Naive thymus-derived CD4-positive, alpha-beta T cell (primary cell): ENCODE measurements at regions of chr6 and their contacts with region 1.

Region 1: GRCh38 chr6:35370124-35370741 is 27.9 kb downstream of the PPARD start:
- DNase-seq: peak in 2 of 9 donors; percentile 21 to 46
- ATAC-seq: peak; percentile 89
- H3K4me3 ChIP-seq: peak overlapping the region; percentile 12
- H3K4me3 Mint-ChIP-seq: peak overlapping the region; percentile 68 to 84 (median 76)
- H3K27ac ChIP-seq: peak overlapping the region; percentile 45
- H3K27ac Mint-ChIP-seq: peak overlapping the region; percentile 63 to 94 (median 86)
- H3K4me1 ChIP-seq: peaks cover 35 to 40% of the 10 kb centered on the region in 2 donors
- H3K4me1 Mint-ChIP-seq: peaks cover 48 to 84% (median 68%) of the 10 kb centered on the region in 7 donors
- H3K27me3 ChIP-seq: no peaks in the 10 kb centered on the region
- H3K27me3 Mint-ChIP-seq: no peaks in the 10 kb centered on the region

Region 2: GRCh38 chr6:34729631-34730470 is 640.4 kb before region 1 on chr6:
- CTCF ChIA-PET with region 1: no interaction called
- POLR2A ChIA-PET with region 1: no interaction called
- intact Hi-C with region 1: no loop called
- DNase-seq: no peak
- ATAC-seq: no peak
- H3K4me3 ChIP-seq: no peak overlapping the region
- H3K4me3 Mint-ChIP-seq: no peak overlapping the region
- H3K27ac ChIP-seq: no peak overlapping the region
- H3K27ac Mint-ChIP-seq: no peak overlapping the region
- H3K4me1 ChIP-seq: no peaks in the 10 kb centered on the region
- H3K4me1 Mint-ChIP-seq: no peaks in the 10 kb centered on the region
- H3K27me3 ChIP-seq: no peaks in the 10 kb centered on the region
- H3K27me3 Mint-ChIP-seq: no peaks in the 10 kb centered on the region

Region 3: GRCh38 chr6:35415065-35415991 is 45.1 kb after region 1 on chr6:
- CTCF ChIA-PET with region 1: interaction called, 3 read pairs
- POLR2A ChIA-PET with region 1: no interaction called
- intact Hi-C with region 1: loop called (anchors 5 kb)
- DNase-seq: peak in 3 of 9 donors; percentile 23 to 26 (median 25)
- ATAC-seq: peak; percentile 53
- H3K4me3 ChIP-seq: no peak overlapping the region
- H3K4me3 Mint-ChIP-seq: peak overlapping the region in 2 of 10 donors; percentile 37 to 40
- H3K27ac ChIP-seq: no peak overlapping the region
- H3K27ac Mint-ChIP-seq: peak overlapping the region; percentile 5 to 84 (median 71)
- H3K4me1 ChIP-seq: peaks cover 0 to 44% of the 10 kb centered on the region in 2 donors
- H3K4me1 Mint-ChIP-seq: peaks cover 33 to 73% (median 67%) of the 10 kb centered on the region in 7 donors
- H3K27me3 ChIP-seq: no peaks in the 10 kb centered on the region
- H3K27me3 Mint-ChIP-seq: no peaks in the 10 kb centered on the region